Panc1 (cell line): ENCODE measurements at regions of chr14 and their contacts with region 1.

Region 1: DNA sequence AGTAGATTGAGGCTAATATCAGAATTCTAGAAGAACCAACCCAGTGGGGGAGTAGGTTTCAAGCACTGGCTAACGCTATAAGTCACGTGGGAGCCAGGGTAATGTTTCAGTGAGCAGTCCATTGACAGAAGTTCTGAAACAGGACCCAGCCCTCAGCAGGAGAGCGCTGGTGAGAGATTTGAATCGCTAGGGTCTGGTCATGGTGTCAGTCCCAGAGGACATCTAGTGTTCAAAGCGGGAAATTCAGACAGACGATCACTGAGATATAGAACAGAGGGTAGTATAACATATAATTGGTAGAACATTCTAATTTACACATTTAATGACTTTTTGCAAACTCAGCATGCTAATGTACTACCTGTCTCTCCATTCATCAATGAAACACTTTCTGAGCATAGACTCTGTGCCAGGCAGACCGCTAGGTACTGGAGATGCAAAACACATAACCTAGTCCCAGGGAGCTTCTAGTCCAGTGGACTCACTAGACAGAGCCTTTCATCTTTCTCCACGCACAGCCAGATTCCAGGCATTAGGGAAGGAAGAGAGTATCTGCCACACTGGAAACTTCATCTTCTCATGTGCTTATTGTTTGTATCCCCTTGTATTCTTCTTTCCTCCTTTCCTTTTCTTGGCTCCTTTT is 35.4 kb upstream of the RNASE3 start:
- DNase-seq: peak; percentile 51
- ATAC-seq: peak; percentile 97
- H3K4me3 ChIP-seq: no peak overlapping the region
- H3K27ac ChIP-seq: no peak overlapping the region
- H3K4me1 ChIP-seq: no peaks in the 10 kb centered on the region; the same call in 1 of the 2 replicates
- H3K27me3 ChIP-seq: peaks cover 5% of the 10 kb centered on the region
- CTCF ChIP-seq: peak; percentile 78

Region 2: DNA sequence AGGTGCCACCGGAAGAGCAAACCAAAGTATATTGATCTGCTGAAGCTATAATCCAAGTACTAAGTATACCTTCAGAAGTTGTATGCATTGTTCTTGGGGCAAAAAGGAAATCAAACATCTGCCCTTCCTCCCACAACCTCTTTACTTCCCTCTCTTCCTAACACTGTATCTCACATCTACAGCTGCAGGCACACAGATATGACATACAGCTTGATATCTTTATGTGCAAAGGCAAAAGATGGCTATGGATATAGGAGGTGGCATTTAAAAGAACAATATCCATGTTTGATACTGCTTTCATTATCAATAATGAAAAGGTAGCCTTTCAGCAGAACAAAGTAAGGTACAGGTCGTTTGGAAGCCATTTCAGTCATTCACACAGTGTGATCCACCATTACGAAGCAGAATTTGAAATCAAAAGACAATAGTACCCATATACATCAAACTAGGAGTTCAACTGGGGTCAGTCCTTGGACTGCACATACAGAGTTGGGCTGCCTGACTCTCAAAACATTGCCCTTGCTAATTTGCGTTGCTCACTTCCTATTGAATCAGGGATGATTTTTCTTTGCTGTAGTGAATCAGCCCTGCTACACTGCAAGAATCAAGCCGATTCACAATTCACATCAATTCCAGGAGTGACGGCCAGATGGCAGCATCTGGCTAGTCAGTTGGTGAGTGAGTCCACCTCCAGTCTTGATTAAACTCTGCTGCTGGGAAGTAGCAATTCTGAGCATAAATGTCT is 158.3 kb before region 1 on chr14:
- CTCF ChIA-PET with region 1: interaction called, 6 read pairs
- POLR2A ChIA-PET with region 1: no interaction called
- in situ Hi-C with region 1: no loop called
- intact Hi-C with region 1: loop called (anchors 2 kb)
- DNase-seq: peak; percentile 73
- ATAC-seq: peak; percentile 92
- H3K4me3 ChIP-seq: no peak overlapping the region
- H3K27ac ChIP-seq: no peak overlapping the region
- H3K4me1 ChIP-seq: no peaks in the 10 kb centered on the region; the same call in 1 of the 2 replicates
- H3K27me3 ChIP-seq: no peaks in the 10 kb centered on the region
- CTCF ChIP-seq: peak; percentile 80